CD8-positive, alpha-beta T cell (primary cell): ENCODE measurements at regions of chr5 and their contacts with region 1.

Region 1: DNA sequence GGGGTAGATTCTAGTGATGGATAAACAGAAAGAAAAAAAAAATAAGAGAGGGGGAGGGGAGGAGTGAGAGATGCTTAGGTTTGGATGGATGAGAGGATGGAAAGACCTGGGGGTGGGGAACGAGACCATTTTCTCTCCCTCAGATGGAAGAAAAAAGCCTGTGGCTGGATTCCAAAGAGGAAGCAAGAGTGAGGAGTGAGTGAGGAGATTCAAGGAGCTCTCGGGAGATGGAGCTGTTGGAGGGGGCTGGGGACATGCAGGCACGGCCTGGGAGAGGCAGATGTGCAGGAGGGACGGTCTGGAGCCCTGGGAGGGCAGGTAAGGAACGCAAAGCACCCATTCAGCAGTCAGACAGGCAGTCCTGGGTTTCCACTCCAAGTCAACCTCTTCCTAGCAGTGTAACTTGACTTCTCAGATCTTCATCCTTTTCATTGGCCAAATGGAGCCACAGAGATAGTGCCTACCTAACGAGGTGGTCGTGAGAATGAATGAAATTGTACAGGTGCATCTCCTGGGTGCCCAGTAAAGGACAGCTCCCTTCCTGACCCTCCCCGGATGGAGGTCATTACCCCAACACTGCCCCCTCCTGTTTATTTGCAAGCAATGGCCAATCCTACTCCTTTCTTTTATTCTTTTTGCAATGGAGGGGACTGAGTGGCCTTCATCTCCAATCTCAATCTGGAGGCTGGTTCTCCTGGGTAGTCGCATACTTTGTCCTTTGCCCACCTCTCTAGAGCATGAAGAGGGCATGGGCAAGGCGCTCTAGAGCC is 52.2 kb downstream of the PCDH1 start:
- DNase-seq: peak in 2 of 9 experiments; percentile 32 to 38
- ATAC-seq: no peak
- H3K4me3 ChIP-seq: no peak overlapping the region
- H3K4me3 Mint-ChIP-seq: no peak overlapping the region
- H3K27ac ChIP-seq: no peak overlapping the region
- H3K27ac Mint-ChIP-seq: no peak overlapping the region
- H3K4me1 ChIP-seq: no peaks in the 10 kb centered on the region
- H3K4me1 Mint-ChIP-seq: no peaks in the 10 kb centered on the region
- H3K27me3 ChIP-seq: no peaks in the 10 kb centered on the region
- H3K27me3 Mint-ChIP-seq: peaks cover 8% of the 10 kb centered on the region
- CTCF ChIP-seq: no peak

Region 2: GRCh38 chr5:141811287-141812155 is 14.5 kb before region 1 on chr5:
- CTCF ChIA-PET with region 1: interaction called, 11 read pairs
- POLR2A ChIA-PET with region 1: no interaction called
- intact Hi-C with region 1: no loop called
- DNase-seq: peak in 7 of 9 experiments; percentile 2 to 61 (median 39)
- ATAC-seq: peak; percentile 83
- H3K4me3 ChIP-seq: no peak overlapping the region
- H3K4me3 Mint-ChIP-seq: no peak overlapping the region
- H3K27ac ChIP-seq: no peak overlapping the region
- H3K27ac Mint-ChIP-seq: no peak overlapping the region
- H3K4me1 ChIP-seq: no peaks in the 10 kb centered on the region
- H3K4me1 Mint-ChIP-seq: peaks cover 2% of the 10 kb centered on the region
- H3K27me3 ChIP-seq: peaks cover 5 to 11% of the 10 kb centered on the region in 2 experiments
- H3K27me3 Mint-ChIP-seq: peaks cover 47% of the 10 kb centered on the region
- CTCF ChIP-seq: peak; percentile 76

Region 3: DNA sequence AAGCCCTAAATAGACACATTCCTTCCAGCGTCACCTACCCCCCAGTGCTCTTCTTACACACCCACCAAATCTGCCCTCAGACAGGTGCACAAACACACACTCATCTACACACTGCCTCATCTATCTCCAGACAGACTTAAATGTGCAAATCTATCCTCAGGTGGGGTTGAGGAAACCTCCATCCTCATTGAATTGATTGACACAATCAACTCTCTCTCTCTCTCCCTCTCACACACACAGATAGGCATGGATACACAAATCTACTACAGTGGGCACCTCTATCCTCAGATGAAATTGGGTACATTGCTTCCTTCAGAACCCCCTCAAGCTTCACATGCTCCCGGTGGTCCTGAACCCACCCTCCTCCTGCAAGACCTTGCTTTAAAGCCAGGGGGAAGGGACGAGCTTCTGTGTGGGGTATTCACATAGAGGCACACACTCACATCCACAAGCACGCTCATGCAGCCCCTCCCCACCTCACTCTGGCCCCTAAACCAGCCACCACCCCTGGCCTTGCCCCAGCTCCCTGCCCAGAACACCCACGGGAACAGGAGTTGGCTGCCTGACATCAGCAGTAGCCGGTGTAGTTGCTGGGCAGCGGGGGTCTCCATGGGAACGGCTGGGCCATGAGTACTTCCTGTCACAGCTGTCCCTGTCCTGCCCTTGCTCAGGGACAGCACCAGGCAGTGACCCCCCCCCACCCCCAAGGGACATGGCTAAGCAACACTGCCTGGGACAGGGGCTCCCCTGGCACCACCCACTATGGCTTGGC is 29.5 kb after region 1 on chr5:
- CTCF ChIA-PET with region 1: no interaction called
- POLR2A ChIA-PET with region 1: no interaction called
- intact Hi-C with region 1: no loop called
- DNase-seq: no peak
- ATAC-seq: no peak
- H3K4me3 ChIP-seq: no peak overlapping the region
- H3K4me3 Mint-ChIP-seq: no peak overlapping the region
- H3K27ac ChIP-seq: no peak overlapping the region
- H3K27ac Mint-ChIP-seq: no peak overlapping the region
- H3K4me1 ChIP-seq: no peaks in the 10 kb centered on the region
- H3K4me1 Mint-ChIP-seq: peaks cover 2% of the 10 kb centered on the region
- H3K27me3 ChIP-seq: no peaks in the 10 kb centered on the region
- H3K27me3 Mint-ChIP-seq: peaks cover 5% of the 10 kb centered on the region
- CTCF ChIP-seq: no peak

Region 4: GRCh38 chr5:141941307-141941706 is 115.3 kb after region 1 on chr5:
- CTCF ChIA-PET with region 1: no interaction called
- POLR2A ChIA-PET with region 1: no interaction called
- intact Hi-C with region 1: no loop called
- DNase-seq: no peak
- ATAC-seq: no peak
- H3K4me3 ChIP-seq: no peak overlapping the region
- H3K4me3 Mint-ChIP-seq: no peak overlapping the region
- H3K27ac ChIP-seq: no peak overlapping the region
- H3K27ac Mint-ChIP-seq: peak overlapping the region; percentile 49
- H3K4me1 ChIP-seq: no peaks in the 10 kb centered on the region
- H3K4me1 Mint-ChIP-seq: no peaks in the 10 kb centered on the region
- H3K27me3 ChIP-seq: no peaks in the 10 kb centered on the region
- H3K27me3 Mint-ChIP-seq: no peaks in the 10 kb centered on the region
- CTCF ChIP-seq: no peak